Sciatic nerve (tissue), 2 donors: ENCODE measurements at regions of chr2 and their contacts with region 1.

Region 1: DNA sequence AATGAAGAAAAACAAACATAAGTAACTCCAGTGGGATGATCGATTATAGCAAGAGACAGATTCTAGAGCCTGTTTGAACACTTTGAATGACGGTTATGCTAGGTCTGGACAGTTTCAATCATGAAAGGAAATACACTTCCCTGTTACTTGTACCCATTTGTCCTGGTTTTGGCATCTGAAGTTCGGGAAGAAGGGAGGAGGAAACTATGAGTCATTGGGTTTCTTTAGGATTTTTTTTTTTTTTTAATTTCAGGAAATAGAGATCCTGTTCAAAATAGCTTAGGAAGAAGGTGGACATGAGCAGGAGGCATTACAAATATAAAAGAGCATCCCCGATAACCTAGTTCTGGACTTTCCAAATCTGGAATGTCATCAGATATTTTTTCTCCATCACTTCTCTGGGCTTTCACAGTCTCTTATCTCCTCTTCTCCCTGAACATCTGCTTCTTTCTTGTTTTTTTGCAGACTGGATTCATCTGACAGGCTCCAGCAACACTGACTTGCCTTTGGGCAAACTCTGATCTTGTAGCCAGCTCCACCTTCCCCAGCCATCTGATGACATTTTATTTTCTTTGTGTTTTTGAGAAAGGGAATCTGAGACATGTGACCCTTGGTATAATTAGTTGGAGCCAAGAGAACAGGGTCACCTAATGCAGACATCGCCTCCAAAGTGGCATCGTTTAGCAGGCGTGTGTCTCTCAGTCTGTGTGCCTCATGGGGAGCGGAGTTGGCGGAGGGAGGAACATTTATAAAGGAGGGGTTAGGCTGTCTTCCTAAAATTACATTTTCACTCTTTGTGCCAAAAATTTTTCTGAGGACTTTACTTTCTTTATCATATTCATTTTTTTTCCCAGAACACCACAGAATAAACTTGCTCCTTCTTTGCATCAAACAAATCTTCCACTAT is 195.3 kb upstream of the EPHA4 start:
- DNase-seq: no peak
- ATAC-seq: no peak

Region 2: GRCh38 chr2:221662689-221663391 is 104.5 kb before region 1 on chr2:
- intact Hi-C with region 1: no loop called
- DNase-seq: no peak
- ATAC-seq: no peak

Region 3: GRCh38 chr2:221747289-221747972 is 19.9 kb before region 1 on chr2:
- intact Hi-C with region 1: no loop called
- DNase-seq: no peak
- ATAC-seq: no peak

Region 4: GRCh38 chr2:221876016-221876415 is 108.7 kb after region 1 on chr2:
- intact Hi-C with region 1: loop called (anchors 5 kb)
- DNase-seq: no peak
- ATAC-seq: no peak